Mammary epithelial cell (primary cell): ENCODE measurements at regions of chr11 and their contacts with region 1.

Region 1: DNA sequence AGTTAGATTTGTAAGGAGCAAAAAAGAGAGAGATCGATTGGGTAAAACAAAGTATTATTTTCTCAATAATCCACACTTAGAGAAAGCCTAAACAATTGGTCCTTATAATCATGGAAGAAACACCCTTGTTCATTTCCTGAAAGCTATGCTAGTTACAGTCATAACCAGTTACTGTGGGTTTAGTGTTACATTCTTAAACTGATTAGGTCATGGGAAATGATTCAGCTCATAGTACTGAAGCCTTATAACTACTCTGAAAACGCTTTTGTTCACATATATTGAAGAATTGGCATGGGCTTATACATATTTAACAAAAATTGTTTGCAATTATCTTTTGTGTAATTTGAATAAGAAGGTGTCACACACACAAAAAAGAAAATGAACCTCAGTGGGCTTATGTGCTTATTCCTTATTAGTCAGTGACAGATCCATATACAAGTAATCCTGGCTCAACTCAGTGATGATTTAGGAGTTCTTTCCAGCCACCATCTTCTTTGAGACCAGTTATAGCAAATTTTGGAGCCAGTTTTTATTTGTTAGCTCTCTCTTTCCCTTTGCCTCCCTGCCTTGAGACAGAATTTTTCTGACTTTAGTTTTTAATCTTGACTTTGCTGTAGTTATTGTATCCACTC is 198.5 kb upstream of the CTSC start:
- DNase-seq: peak; percentile 90
- H3K4me3 ChIP-seq: no peak overlapping the region
- H3K27ac ChIP-seq: peak overlapping the region; percentile 92
- H3K4me1 ChIP-seq: peaks cover 45% of the 10 kb centered on the region
- H3K27me3 ChIP-seq: no peaks in the 10 kb centered on the region
- CTCF ChIP-seq: no peak

Region 2: GRCh38 chr11:88320149-88320559 is 215.9 kb before region 1 on chr11:
- CTCF ChIA-PET with region 1: no interaction called
- dilution Hi-C with region 1: loop called (anchors 10 kb)
- in situ Hi-C with region 1: loop called in 1 of 2 experiments (anchors 10 kb)
- intact Hi-C with region 1: no loop called
- DNase-seq: peak; percentile 32
- H3K4me3 ChIP-seq: no peak overlapping the region
- H3K27ac ChIP-seq: no peak overlapping the region
- H3K4me1 ChIP-seq: peaks cover 29% of the 10 kb centered on the region
- H3K27me3 ChIP-seq: no peaks in the 10 kb centered on the region
- CTCF ChIP-seq: no peak

Region 3: DNA sequence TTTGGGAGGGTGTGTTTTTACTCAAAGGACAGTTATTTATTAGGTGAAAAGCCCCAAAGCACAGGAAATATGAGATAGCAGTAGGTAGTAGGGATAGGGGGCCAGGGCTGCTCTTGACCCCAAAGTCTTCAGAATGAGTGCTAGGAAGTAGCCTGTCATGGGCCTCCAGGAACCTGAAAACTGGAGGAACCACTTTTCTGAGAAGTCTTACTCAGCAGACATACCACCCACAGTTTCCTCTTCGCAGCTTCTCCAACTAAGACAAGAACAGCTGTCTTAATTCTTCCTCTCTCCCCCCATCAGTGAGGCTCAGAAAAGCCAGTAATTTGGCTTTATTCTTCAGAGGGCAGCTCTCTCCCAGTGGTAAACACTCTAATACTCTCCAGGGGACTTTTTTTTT is 114.5 kb before region 1 on chr11:
- CTCF ChIA-PET with region 1: interaction called, 7 read pairs
- dilution Hi-C with region 1: no loop called
- in situ Hi-C with region 1: no loop called
- intact Hi-C with region 1: loop called (anchors 1 kb)
- DNase-seq: peak; percentile 82
- H3K4me3 ChIP-seq: no peak overlapping the region
- H3K27ac ChIP-seq: peak overlapping the region; percentile 95
- H3K4me1 ChIP-seq: peaks cover 45% of the 10 kb centered on the region
- H3K27me3 ChIP-seq: no peaks in the 10 kb centered on the region
- CTCF ChIP-seq: no peak

Region 4: DNA sequence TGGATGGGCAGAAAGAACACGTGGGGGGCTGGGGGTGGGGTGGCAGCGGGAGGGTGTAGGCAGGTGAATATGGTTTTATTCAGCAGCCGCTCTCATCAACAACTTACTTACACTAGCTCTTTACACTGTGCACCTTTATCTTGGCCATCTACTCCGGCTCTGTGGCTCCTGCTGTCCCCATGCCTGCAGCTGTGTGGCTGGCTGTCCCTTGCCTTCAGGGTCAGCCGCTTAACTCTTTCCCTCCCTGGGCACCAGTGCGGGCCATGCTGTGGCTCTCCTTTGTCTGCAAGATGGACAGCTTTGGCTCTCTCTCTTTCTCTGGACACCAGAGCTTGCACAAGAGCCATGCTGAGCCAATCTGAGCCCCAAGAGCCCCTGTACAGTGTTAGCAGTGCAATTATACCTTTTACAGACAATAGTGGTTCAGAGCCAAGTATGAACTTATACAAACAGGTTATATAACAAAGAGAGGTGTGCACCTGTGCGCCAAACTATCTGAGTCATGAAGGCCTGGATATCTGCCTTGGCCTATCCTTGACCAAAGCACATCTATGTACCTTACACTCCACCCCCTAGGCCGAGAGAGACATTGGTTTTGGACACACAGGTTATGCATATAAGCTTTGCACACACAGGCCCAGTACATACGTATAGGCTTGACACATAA is 104.2 kb before region 1 on chr11:
- CTCF ChIA-PET with region 1: interaction called, 10 read pairs
- dilution Hi-C with region 1: no loop called
- in situ Hi-C with region 1: no loop called
- intact Hi-C with region 1: no loop called
- DNase-seq: no peak
- H3K4me3 ChIP-seq: no peak overlapping the region
- H3K27ac ChIP-seq: no peak overlapping the region
- H3K4me1 ChIP-seq: peaks cover 22% of the 10 kb centered on the region
- H3K27me3 ChIP-seq: no peaks in the 10 kb centered on the region
- CTCF ChIP-seq: no peak

Region 5: DNA sequence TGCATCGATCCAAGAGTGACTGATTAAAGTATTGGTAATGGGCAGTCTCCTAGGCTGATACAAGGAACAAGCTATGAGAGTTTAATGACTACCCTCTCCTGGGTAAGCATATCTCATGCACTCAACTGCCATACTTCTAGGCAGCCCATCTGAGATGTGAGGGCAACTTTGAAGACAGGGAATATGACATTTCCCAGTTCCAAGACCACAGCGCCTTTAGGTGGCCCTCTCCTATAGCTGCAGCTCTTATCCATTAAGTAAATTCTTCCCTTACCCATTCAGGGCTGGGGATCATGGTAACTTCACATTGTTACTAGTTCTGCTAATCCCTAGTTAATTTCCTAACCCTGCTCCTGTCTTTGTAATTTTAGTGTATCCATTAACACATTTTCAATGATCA is 41.2 kb before region 1 on chr11:
- CTCF ChIA-PET with region 1: no interaction called
- dilution Hi-C with region 1: loop called (anchors 5 kb)
- in situ Hi-C with region 1: no loop called
- intact Hi-C with region 1: no loop called
- DNase-seq: no peak
- H3K4me3 ChIP-seq: no peak overlapping the region
- H3K27ac ChIP-seq: no peak overlapping the region
- H3K4me1 ChIP-seq: no peaks in the 10 kb centered on the region
- H3K27me3 ChIP-seq: no peaks in the 10 kb centered on the region
- CTCF ChIP-seq: peak in 1 of 2 donors; percentile 15